MCF 10A (cell line): ENCODE measurements at regions of chr4 and their contacts with region 1.

Region 1: GRCh38 chr4:56907489-56908205 is at the start of gene REST:
- DNase-seq: peak; percentile 63
- H3K4me3 Mint-ChIP-seq: peak within 1 kb of the TSS; percentile 97
- H3K27ac Mint-ChIP-seq: peak within 1 kb of the TSS; percentile 85
- H3K4me1 Mint-ChIP-seq: peaks cover 18% of the 10 kb centered on the region
- H3K27me3 Mint-ChIP-seq: no peaks in the 10 kb centered on the region
- CTCF ChIP-seq: no peak
- total RNA-seq, gene REST: 50.5 and 51.6 TPM in 2 replicates

Region 2: GRCh38 chr4:56931924-56932323 is 24.3 kb after region 1 on chr4:
- CTCF ChIA-PET with region 1: no interaction called
- POLR2A ChIA-PET with region 1: interaction called, 29 read pairs
- intact Hi-C with region 1: no loop called
- DNase-seq: no peak
- H3K4me3 Mint-ChIP-seq: no peak overlapping the region
- H3K27ac Mint-ChIP-seq: peak overlapping the region; percentile 32
- H3K4me1 Mint-ChIP-seq: peaks cover 6% of the 10 kb centered on the region
- H3K27me3 Mint-ChIP-seq: no peaks in the 10 kb centered on the region
- CTCF ChIP-seq: no peak

Region 3: DNA sequence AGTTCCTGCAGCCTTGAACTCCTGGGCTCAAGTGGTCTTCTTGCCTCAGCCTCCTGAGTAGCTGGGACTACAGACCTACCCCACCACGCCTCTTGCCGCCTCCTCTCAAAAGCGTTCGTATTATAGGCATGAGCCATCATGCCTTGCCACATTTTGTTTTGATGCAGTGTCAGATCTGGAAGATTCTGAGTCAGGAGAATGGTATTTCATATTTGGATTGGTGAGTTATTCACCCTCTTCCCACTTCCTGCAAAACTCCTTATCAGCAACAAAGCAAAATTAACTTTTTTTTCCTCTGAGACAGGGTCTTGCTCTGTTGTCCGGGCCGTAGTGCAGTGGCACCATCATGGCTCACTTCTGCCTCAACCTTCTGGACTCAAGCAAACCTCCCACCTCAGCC is 29.6 kb after region 1 on chr4:
- CTCF ChIA-PET with region 1: interaction called, 4 read pairs
- POLR2A ChIA-PET with region 1: interaction called, 29 read pairs
- intact Hi-C with region 1: no loop called
- DNase-seq: peak; percentile 73
- H3K4me3 Mint-ChIP-seq: no peak overlapping the region
- H3K27ac Mint-ChIP-seq: peak overlapping the region; percentile 63
- H3K4me1 Mint-ChIP-seq: peaks cover 13% of the 10 kb centered on the region
- H3K27me3 Mint-ChIP-seq: no peaks in the 10 kb centered on the region
- CTCF ChIP-seq: no peak

Region 4: GRCh38 chr4:56958111-56958517 is 50.5 kb after region 1 on chr4:
- CTCF ChIA-PET with region 1: no interaction called
- POLR2A ChIA-PET with region 1: interaction called, 12 read pairs
- intact Hi-C with region 1: no loop called
- DNase-seq: peak; percentile 93
- H3K4me3 Mint-ChIP-seq: peak overlapping the region; percentile 36
- H3K27ac Mint-ChIP-seq: peak overlapping the region; percentile 50
- H3K4me1 Mint-ChIP-seq: peaks cover 9% of the 10 kb centered on the region
- H3K27me3 Mint-ChIP-seq: no peaks in the 10 kb centered on the region
- CTCF ChIP-seq: no peak